Naive thymus-derived CD4-positive, alpha-beta T cell (primary cell): ENCODE measurements at regions of chr5 and their contacts with region 1.

Region 1: GRCh38 chr5:95664204-95664786 is 17.7 kb downstream of the RFESD start:
- DNase-seq: peak in 5 of 9 donors; percentile 31 to 49 (median 41)
- ATAC-seq: peak; percentile 65
- H3K4me3 ChIP-seq: no peak overlapping the region
- H3K4me3 Mint-ChIP-seq: no peak overlapping the region
- H3K27ac ChIP-seq: no peak overlapping the region
- H3K27ac Mint-ChIP-seq: no peak overlapping the region
- H3K4me1 ChIP-seq: peaks cover 0 to 5% of the 10 kb centered on the region in 2 donors
- H3K4me1 Mint-ChIP-seq: peaks cover 0 to 8% (median 3%) of the 10 kb centered on the region in 7 donors
- H3K27me3 ChIP-seq: no peaks in the 10 kb centered on the region
- H3K27me3 Mint-ChIP-seq: peaks cover 0 to 8% (median 0%) of the 10 kb centered on the region in 5 donors

Region 2: DNA sequence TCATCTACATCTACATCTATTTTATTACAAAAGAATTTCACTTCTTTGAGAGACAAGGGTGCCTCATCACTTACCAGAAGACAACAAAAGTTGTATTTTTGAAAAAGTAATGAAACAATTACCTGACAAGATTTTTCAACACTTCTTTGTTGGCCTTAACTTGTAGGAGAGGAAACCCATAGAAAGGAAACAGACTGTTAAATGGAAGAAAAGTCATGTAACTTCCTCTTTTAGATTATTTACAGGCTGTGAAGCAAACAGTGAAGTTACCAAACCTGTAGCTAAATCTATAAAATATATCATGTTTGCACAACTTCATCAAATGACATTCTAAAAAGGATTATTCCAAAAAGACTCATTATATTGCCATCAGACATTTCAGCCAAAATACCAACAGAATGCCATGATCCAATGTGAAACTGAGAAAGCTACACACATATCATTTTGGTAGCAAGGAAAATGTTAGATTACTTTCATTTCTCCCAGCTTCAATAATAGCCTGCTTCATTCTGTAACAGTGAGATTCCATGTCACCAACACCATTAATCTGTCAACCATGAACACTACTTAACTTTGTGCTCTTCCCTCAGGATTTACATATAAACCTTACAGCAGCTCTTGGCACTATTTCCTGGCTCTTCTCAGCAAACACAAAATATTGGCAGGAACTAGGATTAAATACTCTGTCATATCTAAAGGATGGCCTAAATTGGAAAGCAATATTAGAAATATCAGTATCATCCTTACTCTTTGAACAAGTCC is 501.9 kb before region 1 on chr5:
- CTCF ChIA-PET with region 1: no interaction called
- POLR2A ChIA-PET with region 1: no interaction called
- intact Hi-C with region 1: no loop called
- DNase-seq: no peak
- ATAC-seq: no peak
- H3K4me3 ChIP-seq: no peak overlapping the region
- H3K4me3 Mint-ChIP-seq: no peak overlapping the region
- H3K27ac ChIP-seq: no peak overlapping the region
- H3K27ac Mint-ChIP-seq: no peak overlapping the region
- H3K4me1 ChIP-seq: no peaks in the 10 kb centered on the region
- H3K4me1 Mint-ChIP-seq: peaks cover 0 to 13% (median 5%) of the 10 kb centered on the region in 7 donors
- H3K27me3 ChIP-seq: no peaks in the 10 kb centered on the region
- H3K27me3 Mint-ChIP-seq: peaks cover 0 to 5% (median 0%) of the 10 kb centered on the region in 5 donors

Region 3: DNA sequence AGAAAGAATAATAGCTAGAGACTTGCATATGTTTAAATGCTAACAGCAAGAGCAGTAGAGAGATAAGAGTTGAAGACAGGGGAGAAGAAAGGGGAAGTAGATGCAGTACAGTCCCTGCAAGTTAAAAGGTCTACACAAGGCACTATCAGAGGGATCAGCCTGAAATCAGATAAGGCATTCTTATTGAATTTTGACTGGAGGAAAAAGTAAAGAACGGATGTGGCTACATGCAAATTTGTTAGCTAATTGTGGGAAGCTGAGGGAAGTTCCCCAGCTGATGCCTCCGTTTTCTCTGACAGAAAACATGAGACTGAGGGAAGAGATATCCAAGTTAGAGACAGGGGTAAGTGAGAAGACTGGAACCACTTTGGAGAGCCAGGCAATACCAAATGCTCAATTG is 53.9 kb after region 1 on chr5:
- CTCF ChIA-PET with region 1: no interaction called
- POLR2A ChIA-PET with region 1: no interaction called
- intact Hi-C with region 1: loop called (anchors 1 to 5 kb)
- DNase-seq: peak in 6 of 9 donors; percentile 21 to 60 (median 40)
- ATAC-seq: peak; percentile 94
- H3K4me3 ChIP-seq: no peak overlapping the region
- H3K4me3 Mint-ChIP-seq: no peak overlapping the region
- H3K27ac ChIP-seq: no peak overlapping the region
- H3K27ac Mint-ChIP-seq: no peak overlapping the region
- H3K4me1 ChIP-seq: peaks cover 9 to 22% of the 10 kb centered on the region in 2 donors
- H3K4me1 Mint-ChIP-seq: peaks cover 8 to 29% (median 16%) of the 10 kb centered on the region in 7 donors
- H3K27me3 ChIP-seq: no peaks in the 10 kb centered on the region
- H3K27me3 Mint-ChIP-seq: peaks cover 0 to 34% (median 0%) of the 10 kb centered on the region in 5 donors

Region 4: DNA sequence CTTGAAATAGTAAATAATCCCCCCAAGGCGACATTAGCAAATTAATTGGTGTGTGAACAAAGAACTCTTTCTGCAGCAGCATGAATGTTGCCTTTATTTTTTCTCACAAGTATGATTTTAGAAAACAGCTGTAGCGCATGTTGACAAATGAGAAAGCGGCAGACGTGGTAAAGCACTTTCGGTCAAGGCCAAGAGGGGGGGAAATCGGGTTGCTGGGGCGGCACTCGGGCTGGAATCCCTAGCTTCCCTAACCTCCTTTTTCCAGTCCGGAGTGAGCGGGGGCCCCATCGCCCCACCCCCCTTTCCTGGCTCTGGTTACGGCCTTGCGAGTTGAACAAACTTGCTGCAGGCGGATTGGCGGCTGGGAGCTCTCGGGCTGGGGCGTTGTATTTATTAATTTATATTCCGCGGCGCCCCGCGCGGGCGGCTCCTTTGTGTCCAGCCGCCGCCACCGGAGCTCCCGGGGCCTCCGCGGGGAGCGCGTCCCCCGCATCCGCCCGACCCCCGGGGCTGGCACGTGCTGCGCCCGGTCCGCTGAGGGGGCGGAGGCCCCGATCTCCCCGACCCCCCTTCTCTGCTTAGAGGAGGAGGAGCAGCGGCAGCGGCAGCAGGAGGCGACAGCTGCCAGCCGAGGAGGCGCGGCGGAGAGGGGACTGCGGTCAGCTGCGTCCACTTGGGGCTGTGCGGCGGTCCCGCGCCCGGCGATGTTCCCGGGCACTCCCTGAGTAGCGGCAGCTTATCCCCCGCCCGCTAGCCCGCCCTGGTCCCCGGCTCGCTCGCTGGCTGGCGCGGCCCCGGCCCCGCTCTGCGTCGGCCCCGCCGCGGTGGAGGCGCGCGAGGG is 66.7 kb after region 1 on chr5 and contains the start of gene RHOBTB3:
- CTCF ChIA-PET with region 1: no interaction called
- POLR2A ChIA-PET with region 1: no interaction called
- intact Hi-C with region 1: loop called in 1 of 2 experiments (anchors 5 kb)
- DNase-seq: peak; percentile 20 to 58 (median 41)
- ATAC-seq: peak; percentile 77
- H3K4me3 ChIP-seq: peak within 1 kb of the TSS; percentile 64
- H3K4me3 Mint-ChIP-seq: peak within 1 kb of the TSS; percentile 83 to 94 (median 88)
- H3K27ac ChIP-seq: peak within 1 kb of the TSS; percentile 9
- H3K27ac Mint-ChIP-seq: peak within 1 kb of the TSS in 8 of 9 donors; percentile 30 to 88 (median 62)
- H3K4me1 ChIP-seq: peaks cover 0 to 20% of the 10 kb centered on the region in 2 donors
- H3K4me1 Mint-ChIP-seq: peaks cover 32 to 88% (median 63%) of the 10 kb centered on the region in 7 donors
- H3K27me3 ChIP-seq: peaks cover 4 to 6% of the 10 kb centered on the region in 2 donors
- H3K27me3 Mint-ChIP-seq: peaks cover 6 to 79% (median 13%) of the 10 kb centered on the region in 5 donors
- total RNA-seq, gene RHOBTB3: 0.24 to 9.6 (median 1.6) TPM

Region 5: GRCh38 chr5:95760273-95761191 is 96.2 kb after region 1 on chr5:
- CTCF ChIA-PET with region 1: interaction called, 3 read pairs
- POLR2A ChIA-PET with region 1: no interaction called
- intact Hi-C with region 1: loop called in 1 of 2 experiments (anchors 2 kb)
- DNase-seq: peak in 7 of 9 donors; percentile 3 to 45 (median 32)
- ATAC-seq: peak; percentile 83
- H3K4me3 ChIP-seq: peak overlapping the region; percentile 50
- H3K4me3 Mint-ChIP-seq: peak overlapping the region; percentile 70 to 86 (median 82)
- H3K27ac ChIP-seq: peak overlapping the region; percentile 58
- H3K27ac Mint-ChIP-seq: peak overlapping the region; percentile 75 to 92 (median 90)
- H3K4me1 ChIP-seq: peaks cover 0 to 27% of the 10 kb centered on the region in 2 donors
- H3K4me1 Mint-ChIP-seq: peaks cover 11 to 46% (median 32%) of the 10 kb centered on the region in 7 donors
- H3K27me3 ChIP-seq: no peaks in the 10 kb centered on the region
- H3K27me3 Mint-ChIP-seq: peaks cover 0 to 44% (median 0%) of the 10 kb centered on the region in 5 donors

Region 6: GRCh38 chr5:96336351-96336985 is 672.2 kb after region 1 on chr5:
- CTCF ChIA-PET with region 1: interaction called, 4 read pairs
- POLR2A ChIA-PET with region 1: no interaction called
- intact Hi-C with region 1: loop called in 1 of 2 experiments (anchors 1 kb)
- DNase-seq: peak in 8 of 9 donors; percentile 41 to 72 (median 65)
- ATAC-seq: peak; percentile 92
- H3K4me3 ChIP-seq: no peak overlapping the region
- H3K4me3 Mint-ChIP-seq: no peak overlapping the region
- H3K27ac ChIP-seq: no peak overlapping the region
- H3K27ac Mint-ChIP-seq: no peak overlapping the region
- H3K4me1 ChIP-seq: no peaks in the 10 kb centered on the region
- H3K4me1 Mint-ChIP-seq: peaks cover 0 to 9% (median 0%) of the 10 kb centered on the region in 7 donors
- H3K27me3 ChIP-seq: no peaks in the 10 kb centered on the region
- H3K27me3 Mint-ChIP-seq: peaks cover 7 to 26% (median 14%) of the 10 kb centered on the region in 5 donors